WTC11 (cell line): ENCODE measurements at regions of chr19 and their contacts with region 1.

Region 1: GRCh38 chr19:41353466-41354342 is at the start of gene TGFB1:
- DNase-seq: peak; percentile 78
- ATAC-seq: peak; percentile 53
- H3K4me3 Mint-ChIP-seq: peak within 1 kb of the TSS; percentile 89
- H3K27ac Mint-ChIP-seq: no peak within 1 kb of the TSS
- H3K4me1 Mint-ChIP-seq: peaks cover 18% of the 10 kb centered on the region
- H3K27me3 Mint-ChIP-seq: peaks cover 57% of the 10 kb centered on the region
- CTCF ChIP-seq: peak; percentile 81
- total RNA-seq, gene TGFB1: 10.4 to 11.8 TPM (median 11.0 TPM) in 3 replicates

Region 2: DNA sequence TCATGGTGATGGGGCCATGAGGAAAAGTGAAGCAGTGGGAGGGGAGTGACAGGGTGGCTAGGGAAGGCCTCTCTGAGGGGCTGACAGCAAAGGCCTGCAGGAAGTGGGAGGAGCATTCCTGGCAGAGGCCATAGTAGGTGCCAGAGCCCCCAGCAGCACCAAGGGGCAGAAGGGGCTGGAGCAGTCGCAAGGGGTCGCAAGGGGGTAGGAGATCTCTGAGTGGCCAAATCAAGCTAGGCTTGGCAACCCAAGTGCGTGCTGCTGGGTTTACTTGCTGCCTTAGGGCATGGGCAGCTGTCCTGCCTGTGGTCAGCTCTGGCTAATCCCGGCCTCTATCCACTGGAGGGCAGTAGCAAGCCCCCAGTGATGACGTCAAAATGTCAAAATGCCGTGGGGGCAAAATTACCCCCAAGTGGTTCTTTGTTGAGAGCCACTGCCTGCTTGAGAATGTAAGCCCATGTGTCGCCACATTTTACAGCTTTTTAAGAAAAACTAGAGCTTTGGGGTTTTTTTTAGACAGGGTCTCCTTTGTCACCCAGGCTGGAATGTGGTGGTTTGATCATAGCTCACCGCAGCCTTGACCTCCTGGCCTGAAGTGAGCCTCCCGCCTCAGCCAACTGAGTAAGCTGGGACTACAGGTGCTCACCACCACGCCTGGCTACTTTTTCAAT is 32.0 kb before region 1 on chr19:
- CTCF ChIA-PET with region 1: interaction called, 66 read pairs
- POLR2A ChIA-PET with region 1: no interaction called
- DNase-seq: peak; percentile 70
- ATAC-seq: peak; percentile 60
- H3K4me3 Mint-ChIP-seq: no peak overlapping the region
- H3K27ac Mint-ChIP-seq: no peak overlapping the region
- H3K4me1 Mint-ChIP-seq: peaks cover 43% of the 10 kb centered on the region
- H3K27me3 Mint-ChIP-seq: no peaks in the 10 kb centered on the region; the same call in 1 of the 2 replicates
- CTCF ChIP-seq: peak; percentile 37; the same call in 1 of the 2 replicates

Region 3: GRCh38 chr19:41341669-41342490 is 11.8 kb before region 1 on chr19:
- CTCF ChIA-PET with region 1: interaction called, 49 read pairs
- POLR2A ChIA-PET with region 1: interaction called, 3 read pairs
- DNase-seq: peak; percentile 56
- ATAC-seq: peak; percentile 89
- H3K4me3 Mint-ChIP-seq: no peak overlapping the region
- H3K27ac Mint-ChIP-seq: no peak overlapping the region
- H3K4me1 Mint-ChIP-seq: no peaks in the 10 kb centered on the region
- H3K27me3 Mint-ChIP-seq: no peaks in the 10 kb centered on the region
- CTCF ChIP-seq: no peak

Region 4: GRCh38 chr19:41373993-41374392 is 20.3 kb after region 1 on chr19:
- CTCF ChIA-PET with region 1: interaction called, 11 read pairs
- POLR2A ChIA-PET with region 1: no interaction called
- DNase-seq: no peak
- ATAC-seq: no peak
- H3K4me3 Mint-ChIP-seq: no peak overlapping the region
- H3K27ac Mint-ChIP-seq: peak overlapping the region; percentile 83
- H3K4me1 Mint-ChIP-seq: peaks cover 17% of the 10 kb centered on the region
- H3K27me3 Mint-ChIP-seq: peaks cover 14% of the 10 kb centered on the region
- CTCF ChIP-seq: no peak

Region 5: GRCh38 chr19:41462497-41462896 is 108.8 kb after region 1 on chr19:
- CTCF ChIA-PET with region 1: no interaction called
- POLR2A ChIA-PET with region 1: no interaction called
- DNase-seq: no peak
- ATAC-seq: no peak
- H3K4me3 Mint-ChIP-seq: no peak overlapping the region
- H3K27ac Mint-ChIP-seq: no peak overlapping the region
- H3K4me1 Mint-ChIP-seq: no peaks in the 10 kb centered on the region
- H3K27me3 Mint-ChIP-seq: peaks cover 38% of the 10 kb centered on the region
- CTCF ChIP-seq: no peak

Region 6: GRCh38 chr19:41500443-41500842 is 146.7 kb after region 1 on chr19:
- CTCF ChIA-PET with region 1: no interaction called
- POLR2A ChIA-PET with region 1: no interaction called
- DNase-seq: no peak
- ATAC-seq: no peak
- H3K4me3 Mint-ChIP-seq: no peak overlapping the region
- H3K27ac Mint-ChIP-seq: no peak overlapping the region
- H3K4me1 Mint-ChIP-seq: peaks cover 4% of the 10 kb centered on the region; the same call in 1 of the 2 replicates
- H3K27me3 Mint-ChIP-seq: peaks cover 92% of the 10 kb centered on the region
- CTCF ChIP-seq: no peak